ENCODE measurements at regions of chr7 and their contacts with region 1.

Region 1: GRCh38 chr7:91835846-91836368 is 44.6 kb downstream of the MTERF1 start:
- DNase-seq: no peak
- CTCF ChIP-seq: no peak

Region 2: GRCh38 chr7:91814189-91814588 is 21.7 kb before region 1 on chr7:
- CTCF ChIA-PET with region 1: interaction called, 17 read pairs
- POLR2A ChIA-PET with region 1: no interaction called
- DNase-seq: no peak
- CTCF ChIP-seq: no peak

Region 3: GRCh38 chr7:91852263-91852741 is 16.4 kb after region 1 on chr7:
- CTCF ChIA-PET with region 1: interaction called, 56 read pairs
- POLR2A ChIA-PET with region 1: no interaction called
- DNase-seq: peak; percentile 11
- CTCF ChIP-seq: peak; percentile 16

Region 4: DNA sequence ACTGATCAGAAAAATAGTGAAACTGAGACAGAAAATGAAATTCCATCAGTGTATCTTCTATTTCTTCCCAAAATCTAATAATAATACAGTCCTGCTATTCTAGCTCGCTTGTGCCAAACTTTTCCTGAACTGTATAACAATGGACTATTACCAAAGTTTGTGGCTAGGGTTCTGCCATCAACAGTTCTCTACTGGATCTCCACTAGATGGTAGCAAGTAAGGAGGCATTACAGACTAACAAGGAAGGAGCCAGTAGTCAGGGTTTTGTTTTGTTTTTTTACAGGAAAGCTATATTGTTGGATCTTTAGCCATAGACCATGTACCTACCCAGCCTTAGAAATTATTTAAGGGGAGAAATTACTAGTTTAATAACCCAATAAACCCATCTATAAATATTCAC is 33.8 kb after region 1 on chr7:
- CTCF ChIA-PET with region 1: interaction called, 14 read pairs
- POLR2A ChIA-PET with region 1: no interaction called
- DNase-seq: no peak
- CTCF ChIP-seq: no peak

Region 5: GRCh38 chr7:92461027-92462003 is 625.4 kb after region 1 on chr7:
- CTCF ChIA-PET with region 1: interaction called, 16 read pairs
- POLR2A ChIA-PET with region 1: no interaction called
- DNase-seq: peak; percentile 44
- CTCF ChIP-seq: peak; percentile 60

Measured in GM10248 (cell line).